Posterior vena cava (tissue), 2 donors: ENCODE measurements at regions of chr2 and their contacts with region 1.

Region 1: GRCh38 chr2:79116997-79117928 is 3.0 kb upstream of the REG1A start:
- DNase-seq: no peak

Region 2: GRCh38 chr2:79087785-79088364 is 29.4 kb before region 1 on chr2 and contains the start of gene REG1B:
- intact Hi-C with region 1: no loop called
- DNase-seq: no peak
- total RNA-seq, gene REG1B: 0.69 to 3.4 TPM

Region 3: GRCh38 chr2:79103214-79103613 is 14.0 kb before region 1 on chr2:
- intact Hi-C with region 1: loop called in 1 of 2 experiments (anchors 1 kb)
- DNase-seq: no peak

Region 4: GRCh38 chr2:79219383-79219988 is 102.2 kb after region 1 on chr2:
- intact Hi-C with region 1: no loop called
- DNase-seq: no peak